ENCODE measurements at regions of chr6 and their contacts with region 1.

Region 1: GRCh38 chr6:2988426-2989331 is 11.0 kb upstream of the NQO2 start:
- DNase-seq: peak; percentile 96
- ATAC-seq: peak; percentile 66
- H3K4me3 ChIP-seq: peak overlapping the region; percentile 76
- H3K27ac ChIP-seq: peak overlapping the region; percentile 97
- H3K4me1 ChIP-seq: peaks cover 39% of the 10 kb centered on the region
- H3K27me3 ChIP-seq: no peaks in the 10 kb centered on the region
- CTCF ChIP-seq: peak; percentile 86

Region 2: DNA sequence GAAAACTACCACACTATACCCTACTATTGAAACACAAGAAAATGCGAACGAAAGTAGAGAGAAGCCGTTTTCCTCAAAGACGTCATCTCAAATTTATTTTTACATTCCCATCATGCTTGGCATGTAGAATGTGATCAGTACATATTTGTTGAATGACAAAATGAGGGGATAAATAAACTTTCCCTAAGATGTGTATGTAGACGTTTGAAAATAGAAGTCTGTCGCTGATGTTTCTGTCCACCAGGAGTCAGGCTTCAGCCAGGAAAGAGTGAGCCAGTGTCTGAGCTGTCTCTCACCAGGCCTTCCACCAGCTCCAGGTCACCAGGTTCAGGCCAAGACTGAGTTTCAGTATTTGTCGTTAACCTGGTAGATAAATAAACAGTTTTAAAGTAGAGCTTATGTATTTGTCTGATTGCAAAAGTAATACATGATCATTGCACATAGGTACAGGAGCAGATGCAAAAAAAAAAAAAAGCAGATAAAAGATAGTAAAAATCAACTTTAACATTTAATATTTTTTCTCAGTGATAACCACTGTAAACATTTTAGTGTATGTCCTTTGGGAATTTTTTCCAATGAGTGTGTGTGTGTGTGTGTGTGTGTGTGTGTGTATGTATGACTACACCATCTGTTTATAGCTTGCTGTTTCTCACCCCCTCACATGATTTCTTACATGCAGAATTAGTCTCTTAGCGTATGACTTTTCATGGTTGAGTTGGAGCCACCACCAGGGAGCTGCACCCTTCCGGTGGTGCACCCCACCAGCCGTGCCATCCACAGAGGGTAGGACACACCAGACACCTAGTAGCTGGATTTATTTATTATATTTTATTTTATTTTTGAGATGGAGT is 197.3 kb before region 1 on chr6:
- CTCF ChIA-PET with region 1: interaction called, 4 read pairs
- POLR2A ChIA-PET with region 1: no interaction called
- intact Hi-C with region 1: loop called (anchors 1 kb)
- DNase-seq: peak; percentile 93
- ATAC-seq: peak; percentile 80
- H3K4me3 ChIP-seq: no peak overlapping the region
- H3K27ac ChIP-seq: peak overlapping the region; percentile 98
- H3K4me1 ChIP-seq: peaks cover 59% of the 10 kb centered on the region
- H3K27me3 ChIP-seq: no peaks in the 10 kb centered on the region
- CTCF ChIP-seq: peak; percentile 92

Region 3: GRCh38 chr6:2931970-2932748 is 56.5 kb before region 1 on chr6:
- CTCF ChIA-PET with region 1: interaction called, 4 read pairs
- POLR2A ChIA-PET with region 1: interaction called, 3 read pairs
- intact Hi-C with region 1: loop called (anchors 10 kb)
- DNase-seq: peak; percentile 97
- ATAC-seq: peak; percentile 99
- H3K4me3 ChIP-seq: no peak overlapping the region
- H3K27ac ChIP-seq: peak overlapping the region; percentile 16; the same call in 1 of the 2 replicates
- H3K4me1 ChIP-seq: peaks cover 4% of the 10 kb centered on the region; the same call in 1 of the 2 replicates
- H3K27me3 ChIP-seq: no peaks in the 10 kb centered on the region
- CTCF ChIP-seq: peak; percentile 96

Region 4: DNA sequence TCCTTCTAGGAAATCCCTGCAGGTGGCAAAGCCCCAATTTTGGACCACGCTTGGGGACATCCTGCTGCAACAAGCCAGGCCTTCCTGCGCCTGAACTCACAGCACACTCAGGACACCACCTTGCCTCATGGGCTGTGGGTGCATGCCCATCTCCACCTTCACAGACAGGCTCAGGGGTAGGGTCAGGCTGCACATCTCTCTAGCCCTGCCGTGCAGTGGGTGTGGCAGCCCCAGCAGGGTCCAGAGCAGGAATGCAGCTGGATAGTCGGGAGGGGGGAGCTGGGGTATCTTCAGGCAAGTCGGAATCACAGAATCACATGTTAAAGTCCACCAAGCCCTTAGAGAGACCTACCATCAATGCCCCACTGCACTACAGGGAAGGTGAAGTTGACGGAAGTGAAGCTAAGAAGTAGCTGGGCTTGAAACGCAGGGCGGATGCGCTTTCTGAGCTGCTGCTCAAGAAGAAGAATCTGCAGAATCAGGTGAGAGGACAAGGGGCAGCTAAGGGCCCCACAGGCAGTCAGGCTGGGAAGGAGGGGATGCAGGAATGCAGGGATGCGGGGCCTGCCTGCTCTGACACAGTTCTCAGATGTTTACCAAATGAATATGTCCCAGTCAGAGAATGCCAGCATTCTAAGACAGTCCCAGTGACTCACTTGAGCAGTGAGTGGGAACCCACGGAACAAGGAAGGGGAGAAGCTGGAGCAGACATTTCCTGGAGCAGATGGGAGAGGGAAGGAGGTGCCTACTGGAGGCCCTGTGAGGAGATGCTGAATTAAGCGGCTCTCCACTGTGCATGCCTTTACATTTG is 28.6 kb before region 1 on chr6:
- CTCF ChIA-PET with region 1: interaction called, 5 read pairs
- POLR2A ChIA-PET with region 1: interaction called, 9 read pairs
- intact Hi-C with region 1: loop called (anchors 2 kb)
- DNase-seq: peak; percentile 92
- ATAC-seq: peak; percentile 91
- H3K4me3 ChIP-seq: 0 out of 2 replicates have a peak overlapping the region, but pooled peaks have one; percentile 2
- H3K27ac ChIP-seq: peak overlapping the region; percentile 92
- H3K4me1 ChIP-seq: peaks cover 39% of the 10 kb centered on the region
- H3K27me3 ChIP-seq: no peaks in the 10 kb centered on the region
- CTCF ChIP-seq: no peak

Region 5: GRCh38 chr6:2999618-3000557 is 11.2 kb after region 1 on chr6 and contains the start of gene NQO2:
- CTCF ChIA-PET with region 1: interaction called, 4 read pairs
- POLR2A ChIA-PET with region 1: interaction called, 14 read pairs
- intact Hi-C with region 1: loop called (anchors 1 kb)
- DNase-seq: peak; percentile 89
- ATAC-seq: peak; percentile 78
- H3K4me3 ChIP-seq: peak within 1 kb of the TSS; percentile 80
- H3K27ac ChIP-seq: peak within 1 kb of the TSS; percentile 49
- H3K4me1 ChIP-seq: peaks cover 17% of the 10 kb centered on the region
- H3K27me3 ChIP-seq: no peaks in the 10 kb centered on the region
- CTCF ChIP-seq: no peak
- total RNA-seq, gene NQO2: 21.5 and 26.8 TPM in 2 replicates

Region 6: GRCh38 chr6:3990692-3991501 is 1002.2 kb after region 1 on chr6:
- CTCF ChIA-PET with region 1: no interaction called
- POLR2A ChIA-PET with region 1: interaction called, 16 read pairs
- intact Hi-C with region 1: no loop called
- DNase-seq: peak; percentile 91
- ATAC-seq: peak; percentile 94
- H3K4me3 ChIP-seq: peak overlapping the region; percentile 61
- H3K27ac ChIP-seq: no peak overlapping the region
- H3K4me1 ChIP-seq: peaks cover 7% of the 10 kb centered on the region; the same call in 1 of the 2 replicates
- H3K27me3 ChIP-seq: no peaks in the 10 kb centered on the region
- CTCF ChIP-seq: peak; percentile 96

Measured in PC-3 (cell line).